ENCODE measurements at regions of chr19 and their contacts with region 1.

Region 1: DNA sequence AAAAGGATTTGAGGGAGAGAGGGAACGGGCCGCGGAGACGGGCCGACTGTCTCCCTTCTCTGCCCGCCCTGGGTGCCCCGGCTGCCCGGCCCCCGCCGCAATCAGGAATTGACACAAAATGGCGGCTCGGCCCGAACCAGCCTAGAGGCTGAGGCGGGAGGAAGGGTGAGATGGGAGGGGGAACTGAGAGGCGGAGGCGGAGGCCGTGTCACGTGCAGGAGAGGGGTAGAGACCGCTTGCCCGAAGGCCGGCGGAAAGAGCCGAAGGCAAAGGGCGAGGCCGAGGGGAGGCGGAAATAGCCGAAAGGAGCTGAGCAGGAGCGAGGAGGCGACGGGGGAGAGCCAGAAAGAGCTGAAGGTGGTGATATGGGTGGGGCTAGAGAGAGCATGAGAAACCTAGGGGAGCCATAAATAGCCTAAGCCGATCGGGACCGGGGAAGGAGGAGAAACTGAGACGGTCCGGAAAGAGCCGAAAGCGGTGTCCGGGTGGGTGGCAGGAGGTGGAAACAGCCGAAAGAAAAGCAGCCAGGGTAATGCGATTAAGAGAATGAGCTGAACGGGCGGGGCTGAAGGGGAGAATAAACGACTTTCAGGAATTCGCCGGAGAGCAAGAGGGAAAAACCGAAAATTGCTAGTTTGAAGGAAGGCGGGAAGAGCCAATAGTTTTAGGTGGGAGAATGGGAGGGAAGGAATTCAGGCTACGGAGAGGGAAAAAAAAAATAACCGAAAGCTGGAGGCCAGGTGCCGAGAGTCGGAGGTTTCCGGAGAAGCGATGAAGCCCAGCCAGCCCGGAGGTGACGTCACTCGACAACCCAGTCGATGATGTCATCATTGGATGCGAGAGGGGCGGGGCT is at the start of gene ZC3H4:
- DNase-seq: peak; percentile 96
- ATAC-seq: peak; percentile 88
- H3K4me3 ChIP-seq: peak within 1 kb of the TSS; percentile 85 to 94 (median 88)
- H3K27ac ChIP-seq: peak within 1 kb of the TSS; percentile 100
- H3K4me1 ChIP-seq: peaks cover 38% of the 10 kb centered on the region
- H3K27me3 ChIP-seq: no peaks in the 10 kb centered on the region; a peak in 1 of 5 replicates
- CTCF ChIP-seq: peak; percentile 0; the same call in 1 of the 2 replicates
- EP300 ChIP-seq: peak in 1 of 2 experiments; percentile 12; a peak in 1 of 4 replicates
- POLR2A ChIP-seq: peak; percentile 76 to 78
- RAD21 ChIP-seq: peak; percentile 24; the same call in 1 of the 2 replicates
- total RNA-seq, gene ZC3H4: 10.7 and 11.2 TPM in 2 replicates

Region 2: DNA sequence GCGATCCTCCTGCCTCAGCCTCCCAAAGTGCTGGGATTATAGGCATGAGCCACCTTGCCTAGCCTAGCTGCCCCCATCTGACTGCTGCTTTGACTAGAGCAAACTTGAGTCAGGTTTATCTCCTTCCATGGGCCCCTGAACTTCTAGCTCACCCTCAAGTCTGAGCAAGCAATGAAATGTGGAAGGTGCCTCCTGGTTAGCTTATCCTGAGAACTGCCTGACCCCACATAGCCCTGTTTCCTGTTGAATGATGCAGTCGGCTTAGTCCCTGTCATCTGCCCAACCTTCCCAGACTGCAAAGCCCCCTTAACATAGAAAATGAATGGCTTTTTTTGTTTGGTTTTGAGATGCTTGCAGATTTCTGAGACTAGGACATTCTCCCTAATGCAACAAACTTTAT is 55.9 kb before region 1 on chr19:
- CTCF ChIA-PET with region 1: no interaction called
- POLR2A ChIA-PET with region 1: interaction called, 24 read pairs
- in situ Hi-C with region 1: no loop called
- intact Hi-C with region 1: no loop called
- DNase-seq: no peak
- ATAC-seq: peak; percentile 15; the same call in 2 of the 3 replicates
- H3K4me3 ChIP-seq: no peak overlapping the region
- H3K27ac ChIP-seq: no peak overlapping the region
- H3K4me1 ChIP-seq: peaks cover 40% of the 10 kb centered on the region
- H3K27me3 ChIP-seq: no peaks in the 10 kb centered on the region
- CTCF ChIP-seq: no peak
- EP300 ChIP-seq: no peak
- POLR2A ChIP-seq: no peak
- RAD21 ChIP-seq: no peak

Region 3: DNA sequence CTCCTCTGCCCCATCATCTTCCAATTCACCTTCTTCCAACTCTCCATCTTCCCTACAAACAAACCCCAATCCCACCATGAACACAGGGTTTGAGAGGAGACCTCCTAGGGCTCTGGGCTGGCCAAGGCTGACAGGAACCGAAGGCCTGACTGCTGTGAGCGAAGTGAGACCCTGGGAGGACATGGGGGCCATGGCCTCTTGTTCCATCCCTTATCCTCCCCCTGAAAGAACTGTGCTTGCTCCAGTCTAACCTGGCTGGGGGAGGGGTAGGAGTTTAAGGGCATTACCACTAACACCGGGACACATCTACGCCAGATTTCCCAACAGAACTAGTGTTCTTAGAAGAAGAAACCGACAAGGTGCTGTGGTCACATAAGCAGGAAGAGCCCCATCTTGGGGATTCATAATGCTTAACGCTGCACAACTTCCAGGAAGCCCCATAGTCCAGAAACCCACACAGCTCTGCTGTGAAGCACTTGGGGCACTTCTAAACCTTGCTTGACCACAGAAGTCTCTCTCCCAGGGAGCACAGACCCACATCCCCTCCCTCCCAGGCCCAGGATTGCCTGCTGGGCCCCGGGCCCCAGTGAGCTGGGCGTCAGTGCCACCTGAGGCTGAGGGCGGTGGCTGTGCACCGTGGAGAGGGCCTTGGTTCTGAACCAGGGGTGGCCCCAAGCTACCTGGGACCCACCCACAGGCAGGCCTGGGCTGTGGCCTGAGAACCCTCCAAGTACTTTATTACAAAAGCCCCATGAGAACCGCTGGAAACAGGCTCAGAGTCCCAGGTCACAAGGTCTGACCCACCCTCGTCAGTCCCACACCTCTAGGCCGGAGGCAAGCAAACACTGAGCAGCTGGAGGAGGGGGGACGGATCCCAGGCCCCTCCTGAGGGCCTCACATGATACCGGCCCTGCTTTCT is 18.4 kb before region 1 on chr19:
- CTCF ChIA-PET with region 1: no interaction called
- POLR2A ChIA-PET with region 1: interaction called, 456 read pairs
- in situ Hi-C with region 1: no loop called
- intact Hi-C with region 1: loop called (anchors 1 kb)
- DNase-seq: peak; percentile 85
- ATAC-seq: peak; percentile 72
- H3K4me3 ChIP-seq: peak overlapping the region in 2 of 3 experiments; percentile 8 to 64; a peak in 3 of 6 replicates
- H3K27ac ChIP-seq: peak overlapping the region; percentile 91
- H3K4me1 ChIP-seq: peaks cover 63% of the 10 kb centered on the region
- H3K27me3 ChIP-seq: no peaks in the 10 kb centered on the region
- CTCF ChIP-seq: no peak
- EP300 ChIP-seq: peak in 1 of 2 experiments; percentile 65; a peak in 1 of 4 replicates
- POLR2A ChIP-seq: peak in 1 of 2 experiments; percentile 17; a peak in 1 of 4 replicates
- RAD21 ChIP-seq: no peak; the same call in 1 of the 2 replicates

Region 4: DNA sequence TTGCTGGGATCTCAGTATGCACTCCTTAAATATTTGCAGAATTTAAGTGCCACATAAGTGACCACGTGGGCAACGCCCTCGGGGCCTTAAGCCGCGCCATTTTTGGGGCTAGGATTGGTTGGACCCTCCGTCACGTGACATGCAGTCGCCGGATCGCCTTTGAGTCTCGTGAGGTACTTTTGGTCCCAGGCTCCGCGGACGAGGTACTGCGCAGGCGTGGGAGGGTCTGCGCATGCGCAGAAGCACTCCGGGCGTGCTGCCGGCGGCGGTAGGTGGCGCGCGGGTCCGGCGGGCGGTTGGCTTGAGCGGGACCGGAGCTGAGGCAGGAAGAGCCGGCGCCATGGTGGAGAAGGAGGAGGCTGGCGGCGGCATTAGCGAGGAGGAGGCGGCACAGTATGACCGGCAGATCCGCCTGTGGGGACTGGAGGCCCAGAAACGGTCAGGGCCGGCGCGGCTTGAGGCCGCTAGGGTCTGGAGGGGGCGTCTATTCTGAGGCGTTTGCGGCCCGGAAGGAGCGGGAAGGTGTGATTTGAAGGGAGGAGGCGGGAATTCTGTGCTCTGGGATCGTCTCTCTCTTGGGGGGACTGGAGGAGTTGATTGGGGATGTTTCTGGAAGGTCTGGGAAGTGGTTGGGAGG is 17.5 kb after region 1 on chr19 and contains the start of gene SAE1:
- CTCF ChIA-PET with region 1: no interaction called
- POLR2A ChIA-PET with region 1: interaction called, 46 read pairs
- in situ Hi-C with region 1: no loop called
- intact Hi-C with region 1: no loop called
- DNase-seq: peak; percentile 97
- ATAC-seq: peak; percentile 90
- H3K4me3 ChIP-seq: peak within 1 kb of the TSS; percentile 78 to 87 (median 87)
- H3K27ac ChIP-seq: peak within 1 kb of the TSS; percentile 81
- H3K4me1 ChIP-seq: peaks cover 44% of the 10 kb centered on the region
- H3K27me3 ChIP-seq: no peaks in the 10 kb centered on the region; a peak in 1 of 5 replicates
- CTCF ChIP-seq: peak; percentile 90
- EP300 ChIP-seq: no peak
- POLR2A ChIP-seq: peak; percentile 45 to 81; a peak in 3 of 4 replicates
- RAD21 ChIP-seq: no peak; the same call in 1 of the 2 replicates
- total RNA-seq, gene SAE1: 197 and 250 TPM in 2 replicates

Region 5: GRCh38 chr19:47225746-47226425 is 112.7 kb after region 1 on chr19:
- CTCF ChIA-PET with region 1: no interaction called
- POLR2A ChIA-PET with region 1: interaction called, 24 read pairs
- in situ Hi-C with region 1: no loop called
- intact Hi-C with region 1: no loop called
- DNase-seq: peak; percentile 72
- ATAC-seq: peak; percentile 70
- H3K4me3 ChIP-seq: peak overlapping the region; percentile 94 to 100 (median 95); a peak in 5 of 6 replicates
- H3K27ac ChIP-seq: peak overlapping the region; percentile 93
- H3K4me1 ChIP-seq: peaks cover 24% of the 10 kb centered on the region
- H3K27me3 ChIP-seq: peaks cover 0 to 4% of the 10 kb centered on the region in 2 experiments; a peak in 1 of 5 replicates
- CTCF ChIP-seq: peak; percentile 43; the same call in 1 of the 2 replicates
- EP300 ChIP-seq: no peak
- POLR2A ChIP-seq: peak; percentile 99
- RAD21 ChIP-seq: peak; percentile 69

Region 6: GRCh38 chr19:47256688-47257443 is 143.6 kb after region 1 on chr19:
- CTCF ChIA-PET with region 1: no interaction called
- POLR2A ChIA-PET with region 1: interaction called, 36 read pairs
- in situ Hi-C with region 1: no loop called
- intact Hi-C with region 1: no loop called
- DNase-seq: peak; percentile 95
- ATAC-seq: peak; percentile 78
- H3K4me3 ChIP-seq: peak overlapping the region; percentile 72 to 88 (median 88); a peak in 4 of 6 replicates
- H3K27ac ChIP-seq: peak overlapping the region; percentile 86
- H3K4me1 ChIP-seq: peaks cover 43% of the 10 kb centered on the region
- H3K27me3 ChIP-seq: no peaks in the 10 kb centered on the region
- CTCF ChIP-seq: no peak
- EP300 ChIP-seq: no peak
- POLR2A ChIP-seq: no peak
- RAD21 ChIP-seq: no peak

Measured in HepG2 (cell line).